K562 (cell line): ENCODE measurements at regions of chr3 and their contacts with region 1.

Region 1: DNA sequence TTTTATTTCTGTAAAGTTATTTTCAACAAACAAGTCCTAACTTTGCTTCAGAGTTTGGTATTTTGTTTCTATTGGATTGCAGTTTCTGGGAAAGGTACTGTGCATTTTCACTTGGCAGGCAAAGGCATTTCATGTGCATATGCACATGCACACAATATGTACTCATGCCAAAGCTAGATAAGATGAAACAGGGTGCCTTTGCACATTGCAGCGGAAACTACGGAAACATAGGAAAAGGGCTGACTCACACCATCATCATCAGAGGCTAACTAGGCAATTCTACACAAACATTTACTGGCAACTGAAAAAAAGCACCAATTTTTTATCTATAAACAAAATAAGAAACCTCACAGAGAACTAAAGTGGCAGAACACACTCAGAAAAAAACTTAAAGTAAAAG is 550.6 kb upstream of the NECTIN3 start:
- DNase-seq: peak; percentile 17 to 85 (median 44)
- ATAC-seq: peak; percentile 93
- H3K4me3 ChIP-seq: no peak overlapping the region
- H3K27ac ChIP-seq: peak overlapping the region; percentile 80
- H3K4me1 ChIP-seq: peaks cover 6 to 9% of the 10 kb centered on the region in 2 experiments; a peak in 4 of 5 replicates
- H3K27me3 ChIP-seq: no peaks in the 10 kb centered on the region
- CTCF ChIP-seq: no peak
- EP300 ChIP-seq: peak; percentile 76; the same call in 1 of the 2 replicates
- POLR2A ChIP-seq: no peak
- RAD21 ChIP-seq: no peak

Region 2: GRCh38 chr3:110504901-110505300 is 16.1 kb before region 1 on chr3:
- CTCF ChIA-PET with region 1: no interaction called
- POLR2A ChIA-PET with region 1: interaction called, 10 read pairs
- in situ Hi-C with region 1: no loop called
- intact Hi-C with region 1: no loop called
- DNase-seq: peak; percentile 30 to 89 (median 34)
- ATAC-seq: peak; percentile 89
- H3K4me3 ChIP-seq: peak overlapping the region; percentile 34
- H3K27ac ChIP-seq: peak overlapping the region; percentile 76
- H3K4me1 ChIP-seq: peaks cover 6 to 7% of the 10 kb centered on the region in 2 experiments; a peak in 3 of 5 replicates
- H3K27me3 ChIP-seq: no peaks in the 10 kb centered on the region
- CTCF ChIP-seq: no peak
- EP300 ChIP-seq: peak; percentile 82
- POLR2A ChIP-seq: peak; percentile 86
- RAD21 ChIP-seq: no peak

Region 3: GRCh38 chr3:110542552-110543150 is 21.6 kb after region 1 on chr3:
- CTCF ChIA-PET with region 1: no interaction called
- POLR2A ChIA-PET with region 1: no interaction called
- in situ Hi-C with region 1: no loop called
- intact Hi-C with region 1: no loop called
- DNase-seq: no peak
- ATAC-seq: no peak
- H3K4me3 ChIP-seq: no peak overlapping the region
- H3K27ac ChIP-seq: no peak overlapping the region
- H3K4me1 ChIP-seq: no peaks in the 10 kb centered on the region
- H3K27me3 ChIP-seq: no peaks in the 10 kb centered on the region
- CTCF ChIP-seq: no peak
- EP300 ChIP-seq: no peak
- POLR2A ChIP-seq: no peak
- RAD21 ChIP-seq: no peak